Heart right ventricle (tissue), 16 donors: ENCODE measurements at regions of chr10 and their contacts with region 1.

Region 1: DNA sequence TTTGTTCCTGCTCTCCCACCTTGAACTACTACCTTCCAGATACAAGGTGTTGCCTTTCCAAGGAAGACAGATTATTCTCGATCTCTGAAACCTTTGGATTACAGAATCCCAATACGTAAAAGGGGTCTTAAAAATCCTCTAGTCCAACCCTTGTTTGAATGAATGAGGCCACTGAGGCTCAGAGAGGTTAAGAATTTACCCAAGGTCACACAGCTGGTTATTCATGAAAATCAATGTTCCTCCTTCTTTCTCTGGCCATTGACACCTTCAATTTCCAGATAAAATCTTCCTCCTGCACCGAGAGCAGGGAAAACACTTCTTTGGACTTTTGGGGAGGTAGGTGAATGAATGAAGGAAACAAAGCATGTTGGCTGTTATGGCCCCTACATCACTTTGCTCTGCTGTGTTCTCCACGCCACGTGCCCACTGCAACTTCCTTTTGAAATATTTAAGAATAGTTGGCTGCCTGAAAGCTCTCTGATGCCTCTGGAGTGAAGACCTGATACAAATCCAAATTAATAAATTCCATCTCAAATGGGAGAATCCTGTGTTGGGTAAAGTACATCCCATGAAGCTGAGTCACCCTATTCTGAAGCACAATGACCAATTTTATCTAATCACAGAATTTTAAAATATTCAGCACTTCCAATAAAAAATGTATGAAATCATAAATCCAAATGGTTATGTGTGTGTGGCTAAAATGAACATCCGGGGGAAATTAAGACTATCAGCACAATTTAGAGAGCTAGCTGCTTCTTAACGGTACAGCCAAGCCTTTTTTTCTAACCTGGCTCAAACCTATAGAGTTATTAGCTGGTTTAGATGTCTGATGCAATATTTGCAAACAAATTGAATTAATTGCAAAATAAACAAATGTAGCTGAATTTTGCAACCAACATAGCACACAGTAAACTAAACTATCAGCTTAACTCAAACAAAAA is 7.3 kb downstream of the SVIL start:
- DNase-seq: no peak
- ATAC-seq: no peak
- H3K4me3 ChIP-seq: peak overlapping the region in 3 of 10 donors; percentile 7 to 55 (median 13)
- H3K27ac ChIP-seq: peak overlapping the region in 2 of 10 donors; percentile 12 to 28
- H3K4me1 ChIP-seq: peaks cover 0 to 71% (median 47%) of the 10 kb centered on the region in 9 donors
- H3K27me3 ChIP-seq: no peaks in the 10 kb centered on the region
- CTCF ChIP-seq: no peak

Region 2: DNA sequence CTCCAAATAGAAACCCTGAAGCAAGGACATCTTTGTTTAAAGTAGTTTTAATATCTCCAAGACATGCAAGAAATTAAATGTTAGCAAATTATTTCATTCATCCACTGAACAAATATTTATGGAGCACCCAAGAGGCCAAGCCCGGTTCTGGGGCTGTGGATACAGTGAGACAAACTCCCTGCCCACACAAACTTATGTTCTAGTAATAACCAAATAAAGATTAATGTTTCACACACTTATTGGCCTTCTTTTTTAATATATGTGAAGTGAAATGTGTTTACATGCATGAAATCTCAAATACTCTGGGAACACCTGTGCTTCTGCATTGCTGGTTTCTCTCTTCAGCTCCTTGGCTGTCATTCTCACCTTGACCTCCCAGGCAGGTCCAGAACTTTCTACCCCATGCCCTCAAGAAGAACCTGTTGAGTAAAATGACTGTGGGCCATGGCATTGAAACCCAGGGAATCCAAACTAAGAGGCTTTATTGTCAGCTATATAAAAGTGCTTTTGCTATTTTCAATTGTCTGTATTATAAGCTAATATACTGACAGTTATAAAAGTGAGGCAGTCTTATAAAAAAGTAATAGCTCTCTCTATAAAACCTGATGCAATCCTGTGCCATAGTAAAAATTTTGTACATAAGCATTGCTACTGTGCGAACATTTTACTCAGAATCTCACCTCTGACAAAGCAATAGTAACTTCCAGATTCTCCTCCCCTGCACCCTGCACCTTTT is 36.4 kb before region 1 on chr10:
- intact Hi-C with region 1: loop called in 3 of 10 experiments (anchors 5 kb)
- DNase-seq: no peak
- ATAC-seq: no peak
- H3K4me3 ChIP-seq: no peak overlapping the region
- H3K27ac ChIP-seq: peak overlapping the region in 7 of 10 donors; percentile 23 to 84 (median 66)
- H3K4me1 ChIP-seq: peaks cover 14 to 94% (median 56%) of the 10 kb centered on the region in 9 donors
- H3K27me3 ChIP-seq: no peaks in the 10 kb centered on the region
- CTCF ChIP-seq: peak in 3 of 9 donors; percentile 2 to 18 (median 3)

Region 3: DNA sequence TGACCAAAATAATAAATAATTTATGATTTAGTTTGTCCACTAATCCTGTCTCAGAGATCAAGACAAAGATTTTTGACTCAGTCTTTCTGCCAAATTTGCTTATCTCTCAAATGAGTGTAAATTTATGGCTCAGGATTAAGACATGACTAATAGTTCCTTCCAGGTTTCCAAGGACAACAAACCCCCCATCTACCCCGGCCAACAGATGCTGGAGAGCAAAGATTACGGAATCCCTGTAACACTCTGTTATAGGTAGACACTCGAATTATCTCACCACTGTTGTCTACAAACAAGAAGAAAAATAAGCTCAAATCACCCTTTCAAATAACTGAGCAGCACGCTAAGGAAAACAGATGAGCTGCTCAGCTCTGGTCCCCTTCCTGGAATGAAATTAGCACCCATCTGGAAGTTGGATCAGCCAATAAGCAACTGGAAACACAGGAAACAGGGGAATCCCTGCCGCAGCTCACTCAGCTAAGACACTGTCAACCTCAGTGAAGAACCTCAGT is 64.1 kb after region 1 on chr10:
- intact Hi-C with region 1: no loop called
- DNase-seq: peak in 1 of 2 donors; percentile 53
- ATAC-seq: peak; percentile 69 to 90 (median 86)
- H3K4me3 ChIP-seq: peak overlapping the region in 4 of 10 donors; percentile 9 to 26 (median 20)
- H3K27ac ChIP-seq: peak overlapping the region; percentile 2 to 77 (median 64)
- H3K4me1 ChIP-seq: peaks cover 5 to 39% (median 26%) of the 10 kb centered on the region in 9 donors
- H3K27me3 ChIP-seq: no peaks in the 10 kb centered on the region
- CTCF ChIP-seq: no peak